ENCODE measurements at regions of chr3 and their contacts with region 1.

Region 1: DNA sequence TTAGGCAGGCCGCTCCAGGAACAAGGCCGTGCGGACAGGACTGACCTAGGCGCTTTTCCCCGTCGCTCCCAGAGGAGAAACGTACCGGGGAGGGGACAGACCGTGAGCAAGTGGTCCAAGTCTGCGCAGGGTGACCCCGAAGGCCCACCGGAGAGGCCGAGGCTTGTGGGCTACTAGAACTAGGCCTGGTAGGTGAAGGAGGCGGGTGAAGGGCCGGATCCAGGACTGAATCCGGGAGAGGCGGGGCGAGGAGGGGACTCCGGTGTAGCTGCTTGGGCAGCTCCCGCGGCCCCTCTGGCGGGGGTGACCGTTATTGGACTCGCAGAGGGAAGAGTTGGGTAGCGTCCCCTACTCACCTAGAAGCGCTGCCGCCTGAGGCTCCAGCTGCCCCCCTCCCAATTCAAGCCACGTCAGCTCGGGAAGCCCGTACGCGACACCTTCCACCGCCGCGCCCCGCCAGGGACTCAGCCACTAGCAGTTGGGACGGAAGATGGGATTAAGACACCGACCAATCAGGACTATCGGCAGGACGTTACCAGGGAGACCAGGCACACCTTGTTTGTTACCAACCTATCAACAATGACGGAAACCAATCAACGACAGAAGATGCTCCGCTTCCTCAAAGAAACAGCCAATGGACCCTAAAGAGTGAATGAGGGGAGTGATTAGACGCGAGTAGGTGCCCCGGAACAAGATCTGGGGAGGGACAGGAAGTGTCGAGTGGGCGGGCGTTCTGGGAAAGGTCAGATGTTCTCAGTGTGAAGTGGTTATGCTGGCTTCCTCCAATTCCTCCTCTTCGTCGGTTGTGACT is at the start of gene GOLGB1:
- DNase-seq: peak; percentile 98 to 100 (median 99)
- H3K4me3 ChIP-seq: peak within 1 kb of the TSS; percentile 78 to 97 (median 84)
- H3K4me3 Mint-ChIP-seq: peak within 1 kb of the TSS in 1 of 2 donors; percentile 43
- H3K27ac ChIP-seq: peak within 1 kb of the TSS; percentile 94 to 99
- H3K27ac Mint-ChIP-seq: no peak within 1 kb of the TSS
- H3K4me1 ChIP-seq: peaks cover 18 to 19% of the 10 kb centered on the region in 2 donors
- H3K4me1 Mint-ChIP-seq: peaks cover 7% of the 10 kb centered on the region
- H3K27me3 ChIP-seq: peaks cover 0 to 3% of the 10 kb centered on the region in 2 donors
- H3K27me3 Mint-ChIP-seq: peaks cover 7 to 11% (median 7%) of the 10 kb centered on the region in 3 donors
- CTCF ChIP-seq: no peak
- polyA plus RNA-seq, gene GOLGB1: 1.2 to 7.1 (median 1.7) TPM

Region 2: DNA sequence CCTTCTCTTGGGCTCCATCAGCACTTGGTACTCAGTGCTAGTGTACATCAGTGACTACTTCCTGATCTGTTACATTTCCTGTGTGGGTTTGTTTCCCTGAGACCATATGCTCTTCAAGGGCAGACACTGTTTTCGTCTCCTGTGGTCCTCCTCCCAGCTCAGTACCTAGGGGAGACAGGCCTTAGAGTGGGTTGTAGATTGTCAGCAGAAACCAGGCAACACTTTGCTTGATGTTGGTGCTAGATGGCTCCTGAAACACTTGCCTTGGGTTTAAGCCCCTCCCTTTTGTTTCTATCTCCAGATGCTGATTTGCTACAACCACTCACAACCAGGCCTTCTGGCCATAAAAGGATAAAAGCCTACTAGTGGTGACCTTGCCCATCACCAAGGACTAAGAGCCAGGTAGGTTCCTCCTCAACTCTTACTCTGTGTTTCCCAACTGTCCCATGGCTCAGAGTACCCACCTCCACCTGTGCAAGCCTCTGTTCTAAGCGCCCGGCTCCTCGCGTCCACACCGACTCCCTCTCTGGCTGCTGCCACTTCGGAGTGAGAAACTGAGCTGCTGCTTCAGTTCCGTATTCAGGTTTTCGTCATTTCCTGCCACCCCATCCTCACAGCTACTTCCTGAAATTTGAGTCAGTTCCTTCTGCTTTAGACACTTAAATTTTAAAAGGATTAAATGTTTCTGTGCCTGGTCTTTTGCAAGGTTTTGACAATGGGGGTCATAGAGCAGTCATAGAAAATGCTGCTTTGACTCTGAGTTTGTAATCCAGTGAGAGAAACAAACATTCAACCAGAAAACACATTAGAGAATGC is 88.9 kb before region 1 on chr3 and contains the start of gene HCLS1:
- intact Hi-C with region 1: loop called (anchors 10 kb)
- DNase-seq: peak; percentile 90 to 92 (median 90)
- H3K4me3 ChIP-seq: peak within 1 kb of the TSS; percentile 69 to 98 (median 80)
- H3K4me3 Mint-ChIP-seq: peak within 1 kb of the TSS; percentile 94 to 99
- H3K27ac ChIP-seq: peak within 1 kb of the TSS; percentile 94 to 97
- H3K27ac Mint-ChIP-seq: peak within 1 kb of the TSS; percentile 99 to 100 (median 100)
- H3K4me1 ChIP-seq: peaks cover 38 to 41% of the 10 kb centered on the region in 2 donors
- H3K4me1 Mint-ChIP-seq: peaks cover 47% of the 10 kb centered on the region
- H3K27me3 ChIP-seq: no peaks in the 10 kb centered on the region
- H3K27me3 Mint-ChIP-seq: no peaks in the 10 kb centered on the region
- CTCF ChIP-seq: no peak
- polyA plus RNA-seq, gene HCLS1: 311 to 483 (median 475) TPM

Region 3: GRCh38 chr3:121834696-121835464 is 85.4 kb after region 1 on chr3 and contains the starts of genes EAF2 and IQCB1:
- intact Hi-C with region 1: loop called (anchors 5 to 10 kb)
- DNase-seq: peak; percentile 94 to 97 (median 96)
- H3K4me3 ChIP-seq: peak within 1 kb of the TSS; percentile 83 to 97 (median 93)
- H3K4me3 Mint-ChIP-seq: peak within 1 kb of the TSS; percentile 96 to 97
- H3K27ac ChIP-seq: peak within 1 kb of the TSS; percentile 75 to 90
- H3K27ac Mint-ChIP-seq: peak within 1 kb of the TSS; percentile 88 to 97 (median 94)
- H3K4me1 ChIP-seq: peaks cover 18 to 44% of the 10 kb centered on the region in 2 donors
- H3K4me1 Mint-ChIP-seq: peaks cover 52% of the 10 kb centered on the region
- H3K27me3 ChIP-seq: no peaks in the 10 kb centered on the region
- H3K27me3 Mint-ChIP-seq: peaks cover 0 to 2% (median 0%) of the 10 kb centered on the region in 3 donors
- CTCF ChIP-seq: no peak
- polyA plus RNA-seq, gene EAF2: 31.5 to 91.6 (median 75.7) TPM
- polyA plus RNA-seq, gene IQCB1: 6.0 to 27.7 (median 7.5) TPM

Region 4: GRCh38 chr3:122258757-122259371 is 509.4 kb after region 1 on chr3:
- intact Hi-C with region 1: loop called in 1 of 2 experiments (anchors 10 kb)
- DNase-seq: peak; percentile 70 to 87 (median 79)
- H3K4me3 ChIP-seq: no peak overlapping the region
- H3K4me3 Mint-ChIP-seq: peak overlapping the region in 1 of 2 donors; percentile 30
- H3K27ac ChIP-seq: no peak overlapping the region
- H3K27ac Mint-ChIP-seq: peak overlapping the region in 1 of 7 donors; percentile 40
- H3K4me1 ChIP-seq: peaks cover 59 to 74% of the 10 kb centered on the region in 2 donors
- H3K4me1 Mint-ChIP-seq: peaks cover 49% of the 10 kb centered on the region
- H3K27me3 ChIP-seq: no peaks in the 10 kb centered on the region
- H3K27me3 Mint-ChIP-seq: peaks cover 0 to 5% (median 2%) of the 10 kb centered on the region in 3 donors
- CTCF ChIP-seq: peak; percentile 81